Right cardiac atrium (tissue), 5 donors: ENCODE measurements at regions of chr17 and their contacts with region 1.

Region 1: GRCh38 chr17:40203131-40203530 is 16.0 kb upstream of the WIPF2 start:
- DNase-seq: no peak
- ATAC-seq: peak; percentile 55 to 79
- H3K4me3 ChIP-seq: no peak overlapping the region
- H3K27ac ChIP-seq: no peak overlapping the region
- H3K4me1 ChIP-seq: no peaks in the 10 kb centered on the region
- H3K27me3 ChIP-seq: no peaks in the 10 kb centered on the region

Region 2: DNA sequence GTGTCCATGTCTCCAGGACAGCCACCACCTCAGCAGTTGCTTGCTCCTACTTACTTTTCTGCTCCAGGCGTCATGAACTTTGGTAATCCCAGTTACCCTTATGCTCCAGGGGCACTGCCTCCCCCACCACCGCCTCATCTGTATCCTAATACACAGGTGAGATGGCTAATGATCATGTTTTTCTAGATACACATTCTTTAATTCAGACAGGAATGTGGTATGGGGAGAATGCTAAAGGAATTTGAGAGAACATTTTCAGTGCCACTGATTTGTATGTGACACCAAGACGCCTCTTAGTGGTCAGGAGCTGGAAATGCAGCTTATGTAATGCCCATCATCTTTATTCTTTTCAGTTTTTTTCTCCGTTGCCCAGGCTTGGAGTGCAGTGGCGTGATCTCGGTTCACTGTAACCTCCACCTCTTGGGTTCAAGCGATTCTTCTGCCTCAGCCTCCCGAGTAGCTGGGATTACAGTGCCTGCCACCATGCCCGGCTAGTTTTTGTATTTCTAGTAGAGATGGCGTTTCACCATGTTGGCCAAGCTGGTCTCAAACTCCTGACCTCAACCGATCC is 34.8 kb before region 1 on chr17:
- intact Hi-C with region 1: no loop called
- DNase-seq: no peak
- ATAC-seq: peak; percentile 54 to 64
- H3K4me3 ChIP-seq: no peak overlapping the region
- H3K27ac ChIP-seq: peak overlapping the region; percentile 64
- H3K4me1 ChIP-seq: no peaks in the 10 kb centered on the region
- H3K27me3 ChIP-seq: no peaks in the 10 kb centered on the region

Region 3: DNA sequence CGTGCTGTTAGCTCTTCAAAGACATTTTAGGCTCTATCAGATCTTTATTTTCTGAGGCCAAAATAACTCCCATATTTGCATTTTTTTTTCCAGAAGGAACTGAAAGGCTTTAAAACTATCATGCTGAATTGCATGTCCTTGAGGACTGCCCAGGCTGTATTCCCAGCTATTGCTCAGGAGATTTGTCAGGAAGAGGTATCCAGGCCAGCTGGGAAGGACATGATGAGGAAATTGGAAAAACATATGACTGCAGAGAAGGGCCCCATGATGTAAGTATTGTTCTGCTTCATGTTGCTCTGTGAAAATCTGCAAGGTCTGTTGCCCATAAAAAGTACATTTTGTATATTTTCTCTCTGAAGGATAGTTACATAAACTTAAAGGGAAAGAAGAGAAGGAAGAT is 90.2 kb after region 1 on chr17:
- intact Hi-C with region 1: loop called in 3 of 4 experiments (anchors 2 to 10 kb)
- DNase-seq: no peak
- ATAC-seq: peak; percentile 75 to 79
- H3K4me3 ChIP-seq: no peak overlapping the region
- H3K27ac ChIP-seq: peak overlapping the region; percentile 45
- H3K4me1 ChIP-seq: no peaks in the 10 kb centered on the region
- H3K27me3 ChIP-seq: no peaks in the 10 kb centered on the region